ENCODE measurements at regions of chr2 and their contacts with region 1.

Region 1: DNA sequence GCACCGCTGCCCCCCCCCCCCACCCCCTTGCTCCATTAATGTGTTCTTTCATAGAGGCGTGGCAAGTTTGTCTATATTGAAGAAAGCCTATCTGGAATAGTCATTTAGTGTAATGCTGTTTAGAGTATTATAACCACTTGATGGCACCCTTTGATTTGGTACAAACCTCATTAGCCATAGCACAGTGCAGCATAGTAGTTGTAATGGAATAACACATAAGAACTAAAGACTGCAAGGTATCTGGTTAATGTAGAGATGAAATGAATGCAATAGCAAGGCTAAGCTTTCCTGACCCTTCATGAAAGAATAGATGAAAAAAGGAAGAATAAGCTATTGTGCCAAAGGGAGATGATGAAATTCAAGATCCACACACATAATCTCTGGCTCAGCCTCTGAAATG is 81.9 kb downstream of the EHBP1 start:
- DNase-seq: no peak
- ATAC-seq: no peak
- H3K4me3 ChIP-seq: no peak overlapping the region
- H3K27ac ChIP-seq: no peak overlapping the region
- H3K4me1 ChIP-seq: no peaks in the 10 kb centered on the region
- H3K27me3 ChIP-seq: no peaks in the 10 kb centered on the region

Region 2: DNA sequence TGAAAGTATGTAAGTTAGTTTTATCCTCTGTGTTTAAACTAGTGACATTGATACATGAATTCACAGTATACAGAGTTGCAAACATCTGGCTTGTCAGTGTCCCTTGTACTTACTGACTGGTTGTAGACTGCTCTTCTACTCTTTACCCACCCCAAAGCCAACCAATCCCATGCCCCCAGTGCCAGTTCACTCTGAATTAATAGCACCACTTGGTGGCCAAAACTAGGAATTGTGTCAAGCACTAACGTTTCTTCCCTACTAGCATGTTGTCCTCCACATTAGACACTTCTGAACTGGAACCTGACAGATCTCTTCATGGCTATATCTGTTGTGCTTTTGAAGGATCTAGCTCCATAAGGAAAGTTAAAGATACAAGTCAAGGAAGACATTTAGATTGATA is 236.1 kb after region 1 on chr2:
- intact Hi-C with region 1: loop called in 1 of 2 experiments (anchors 10 kb)
- DNase-seq: no peak
- ATAC-seq: no peak
- H3K4me3 ChIP-seq: no peak overlapping the region
- H3K27ac ChIP-seq: no peak overlapping the region
- H3K4me1 ChIP-seq: no peaks in the 10 kb centered on the region
- H3K27me3 ChIP-seq: no peaks in the 10 kb centered on the region

Region 3: DNA sequence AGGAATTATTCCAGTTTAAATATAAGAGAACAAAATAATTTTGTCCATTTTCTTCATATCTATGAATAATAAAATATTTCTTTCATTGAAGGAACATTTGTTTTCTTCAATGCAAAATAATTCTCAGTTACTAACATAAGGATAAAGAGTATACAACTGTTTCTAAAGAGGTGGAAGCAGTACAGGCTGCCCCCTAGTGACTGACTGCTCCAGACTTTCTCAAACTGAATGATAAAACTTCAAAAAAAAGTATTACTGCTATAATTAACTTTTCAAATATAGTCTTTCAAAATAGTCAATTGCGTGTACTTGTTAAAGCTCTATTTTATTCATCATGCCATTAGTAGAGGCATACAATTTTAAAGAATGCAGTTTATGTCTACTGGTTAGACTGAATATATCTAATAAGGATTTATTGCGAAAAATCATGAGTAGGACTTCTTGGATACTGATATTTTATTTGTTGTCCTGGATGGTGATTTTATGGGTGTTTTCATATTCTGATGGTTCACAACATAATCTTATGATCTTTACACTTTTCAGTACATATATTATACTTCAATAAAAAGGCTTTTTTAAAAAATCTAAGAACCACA is 700.8 kb after region 1 on chr2:
- intact Hi-C with region 1: loop called in 1 of 2 experiments (anchors 5 kb)
- DNase-seq: no peak
- ATAC-seq: no peak
- H3K4me3 ChIP-seq: no peak overlapping the region
- H3K27ac ChIP-seq: no peak overlapping the region
- H3K4me1 ChIP-seq: no peaks in the 10 kb centered on the region
- H3K27me3 ChIP-seq: no peaks in the 10 kb centered on the region

Measured in aorta (tissue), 5 donors.